Activated CD8-positive, alpha-beta T cell treated with anti-CD3 and anti-CD28 coated beads for 36 hours (primary cell): ENCODE measurements at regions of chr18 and their contacts with region 1.

Region 1: DNA sequence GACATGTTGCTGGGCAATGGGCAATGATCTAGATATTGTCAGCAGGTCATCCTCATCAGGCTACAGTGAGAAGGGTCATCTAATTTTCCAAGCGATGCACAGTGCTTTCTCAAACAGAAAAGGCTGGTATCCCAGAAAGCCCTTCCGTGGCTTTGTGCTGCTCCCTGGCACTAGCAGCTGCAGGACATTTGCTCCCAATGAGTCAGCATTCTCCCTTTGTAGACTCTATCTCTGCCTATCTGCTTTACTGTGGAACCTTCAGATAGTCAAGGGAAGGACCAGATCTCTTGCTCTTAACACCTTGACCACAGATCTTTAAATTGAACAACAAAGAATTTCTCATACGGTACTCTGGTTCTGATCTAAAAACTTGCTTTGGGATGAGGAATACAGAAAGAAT is 101.4 kb downstream of the CDH2 start:
- DNase-seq: no peak
- ATAC-seq: no peak
- H3K4me3 Mint-ChIP-seq: no peak overlapping the region
- H3K27ac Mint-ChIP-seq: no peak overlapping the region
- H3K4me1 Mint-ChIP-seq: no peaks in the 10 kb centered on the region
- H3K27me3 Mint-ChIP-seq: no peaks in the 10 kb centered on the region
- CTCF ChIP-seq: no peak

Region 2: DNA sequence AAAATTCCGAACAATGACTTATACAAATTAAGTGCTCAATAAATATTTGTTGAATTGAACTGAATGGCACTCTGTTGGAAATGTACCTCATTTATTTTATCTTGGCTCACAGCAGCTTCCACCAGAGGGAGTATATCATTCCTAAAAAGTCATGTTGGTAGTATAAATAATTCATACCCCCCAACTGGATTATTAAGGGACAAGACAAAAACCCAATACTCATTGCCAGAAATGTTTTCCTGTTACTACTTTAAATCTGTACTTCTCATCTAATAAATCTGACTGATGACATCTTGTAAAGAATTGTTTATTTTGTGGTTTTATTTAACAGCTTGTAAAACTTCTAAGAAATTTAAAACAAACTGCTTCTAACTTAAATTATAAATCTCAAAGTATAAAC is 62.4 kb before region 1 on chr18:
- CTCF ChIA-PET with region 1: no interaction called
- POLR2A ChIA-PET with region 1: no interaction called
- intact Hi-C with region 1: no loop called
- DNase-seq: no peak
- ATAC-seq: no peak
- H3K4me3 Mint-ChIP-seq: no peak overlapping the region
- H3K27ac Mint-ChIP-seq: no peak overlapping the region
- H3K4me1 Mint-ChIP-seq: no peaks in the 10 kb centered on the region
- H3K27me3 Mint-ChIP-seq: no peaks in the 10 kb centered on the region
- CTCF ChIP-seq: no peak

Region 3: GRCh38 chr18:28136071-28136470 is 60.6 kb after region 1 on chr18:
- CTCF ChIA-PET with region 1: no interaction called
- POLR2A ChIA-PET with region 1: no interaction called
- intact Hi-C with region 1: loop called (anchors 10 kb)
- DNase-seq: no peak
- ATAC-seq: no peak
- H3K4me3 Mint-ChIP-seq: no peak overlapping the region
- H3K27ac Mint-ChIP-seq: no peak overlapping the region
- H3K4me1 Mint-ChIP-seq: no peaks in the 10 kb centered on the region
- H3K27me3 Mint-ChIP-seq: no peaks in the 10 kb centered on the region
- CTCF ChIP-seq: no peak